CD8-positive, alpha-beta T cell (primary cell): ENCODE measurements at regions of chr14 and their contacts with region 1.

Region 1: GRCh38 chr14:102878174-102878969 is 44.1 kb upstream of the AMN start:
- DNase-seq: no peak
- ATAC-seq: peak; percentile 36
- H3K4me3 ChIP-seq: no peak overlapping the region
- H3K4me3 Mint-ChIP-seq: no peak overlapping the region
- H3K27ac ChIP-seq: no peak overlapping the region
- H3K27ac Mint-ChIP-seq: no peak overlapping the region
- H3K4me1 ChIP-seq: no peaks in the 10 kb centered on the region
- H3K4me1 Mint-ChIP-seq: no peaks in the 10 kb centered on the region
- H3K27me3 ChIP-seq: no peaks in the 10 kb centered on the region
- H3K27me3 Mint-ChIP-seq: no peaks in the 10 kb centered on the region
- CTCF ChIP-seq: no peak

Region 2: GRCh38 chr14:101635749-101636560 is 1242.4 kb before region 1 on chr14:
- CTCF ChIA-PET with region 1: no interaction called
- POLR2A ChIA-PET with region 1: no interaction called
- intact Hi-C with region 1: no loop called
- DNase-seq: no peak
- ATAC-seq: no peak
- H3K4me3 ChIP-seq: no peak overlapping the region
- H3K4me3 Mint-ChIP-seq: no peak overlapping the region
- H3K27ac ChIP-seq: no peak overlapping the region
- H3K27ac Mint-ChIP-seq: no peak overlapping the region
- H3K4me1 ChIP-seq: no peaks in the 10 kb centered on the region
- H3K4me1 Mint-ChIP-seq: peaks cover 5% of the 10 kb centered on the region
- H3K27me3 ChIP-seq: peaks cover 0 to 5% of the 10 kb centered on the region in 2 experiments
- H3K27me3 Mint-ChIP-seq: peaks cover 23% of the 10 kb centered on the region
- CTCF ChIP-seq: no peak

Region 3: GRCh38 chr14:102451061-102451350 is 427.4 kb before region 1 on chr14:
- CTCF ChIA-PET with region 1: no interaction called
- POLR2A ChIA-PET with region 1: no interaction called
- intact Hi-C with region 1: loop called in 1 of 2 experiments (anchors 5 kb)
- DNase-seq: no peak
- ATAC-seq: no peak
- H3K4me3 ChIP-seq: no peak overlapping the region
- H3K4me3 Mint-ChIP-seq: no peak overlapping the region
- H3K27ac ChIP-seq: no peak overlapping the region
- H3K27ac Mint-ChIP-seq: no peak overlapping the region
- H3K4me1 ChIP-seq: no peaks in the 10 kb centered on the region
- H3K4me1 Mint-ChIP-seq: no peaks in the 10 kb centered on the region
- H3K27me3 ChIP-seq: no peaks in the 10 kb centered on the region
- H3K27me3 Mint-ChIP-seq: no peaks in the 10 kb centered on the region
- CTCF ChIP-seq: no peak